MCF 10A (cell line): ENCODE measurements at regions of chr6 and their contacts with region 1.

Region 1: DNA sequence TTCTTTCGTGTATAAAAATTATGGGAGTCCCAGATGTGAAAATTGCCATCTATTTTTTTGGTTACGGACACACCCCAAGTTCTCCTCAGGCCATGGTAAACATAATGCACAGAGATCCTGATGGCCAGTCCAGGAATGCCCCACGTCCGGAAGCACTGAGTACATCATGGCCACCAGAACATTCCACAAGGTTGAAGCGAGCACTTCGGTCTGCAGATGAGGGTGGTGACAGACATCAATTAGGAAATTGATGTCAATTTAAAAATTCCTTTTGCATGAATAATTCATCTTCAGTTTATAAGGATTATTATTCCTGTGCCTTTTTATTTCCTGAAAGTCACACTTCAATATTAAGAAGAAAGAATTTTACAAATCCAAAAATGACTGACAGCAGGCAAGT is 13.2 kb upstream of the EXOC2 start:
- DNase-seq: peak; percentile 22
- H3K4me3 Mint-ChIP-seq: no peak overlapping the region
- H3K27ac Mint-ChIP-seq: no peak overlapping the region
- H3K4me1 Mint-ChIP-seq: peaks cover 11% of the 10 kb centered on the region
- H3K27me3 Mint-ChIP-seq: no peaks in the 10 kb centered on the region
- CTCF ChIP-seq: no peak

Region 2: GRCh38 chr6:692855-693722 is 13.1 kb before region 1 on chr6 and contains the start of gene EXOC2:
- CTCF ChIA-PET with region 1: interaction called, 3 read pairs
- POLR2A ChIA-PET with region 1: interaction called, 13 read pairs
- intact Hi-C with region 1: no loop called
- DNase-seq: peak; percentile 85
- H3K4me3 Mint-ChIP-seq: peak within 1 kb of the TSS; percentile 93
- H3K27ac Mint-ChIP-seq: peak within 1 kb of the TSS; percentile 82
- H3K4me1 Mint-ChIP-seq: peaks cover 16% of the 10 kb centered on the region
- H3K27me3 Mint-ChIP-seq: no peaks in the 10 kb centered on the region
- CTCF ChIP-seq: no peak
- total RNA-seq, gene EXOC2: 14.6 and 18.9 TPM in 2 replicates